ENCODE measurements at regions of chr7 and their contacts with region 1.

Region 1: DNA sequence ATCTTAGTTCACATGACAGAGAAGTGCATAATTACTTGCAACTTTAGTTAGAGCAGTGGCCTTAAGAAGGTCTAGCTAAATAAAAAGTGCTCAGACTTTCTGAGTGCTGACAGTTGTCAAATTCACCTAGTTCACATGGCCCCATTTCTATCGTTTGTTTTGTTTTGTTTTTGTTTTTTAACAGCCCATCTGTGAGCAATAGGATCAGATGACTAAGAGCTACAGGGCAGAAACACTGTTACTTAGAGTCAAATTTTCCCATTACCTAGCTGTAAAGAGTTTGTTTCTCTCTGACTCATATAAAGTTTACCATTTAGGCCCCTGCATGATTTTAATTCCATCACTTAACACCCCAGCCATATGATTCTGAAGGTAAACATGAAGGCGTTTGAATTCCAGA is 18.8 kb downstream of the CAV1 start:
- DNase-seq: no peak

Region 2: GRCh38 chr7:116515584-116515983 is 28.1 kb before region 1 on chr7:
- intact Hi-C with region 1: loop called in 1 of 2 experiments (anchors 1 kb)
- DNase-seq: no peak

Region 3: DNA sequence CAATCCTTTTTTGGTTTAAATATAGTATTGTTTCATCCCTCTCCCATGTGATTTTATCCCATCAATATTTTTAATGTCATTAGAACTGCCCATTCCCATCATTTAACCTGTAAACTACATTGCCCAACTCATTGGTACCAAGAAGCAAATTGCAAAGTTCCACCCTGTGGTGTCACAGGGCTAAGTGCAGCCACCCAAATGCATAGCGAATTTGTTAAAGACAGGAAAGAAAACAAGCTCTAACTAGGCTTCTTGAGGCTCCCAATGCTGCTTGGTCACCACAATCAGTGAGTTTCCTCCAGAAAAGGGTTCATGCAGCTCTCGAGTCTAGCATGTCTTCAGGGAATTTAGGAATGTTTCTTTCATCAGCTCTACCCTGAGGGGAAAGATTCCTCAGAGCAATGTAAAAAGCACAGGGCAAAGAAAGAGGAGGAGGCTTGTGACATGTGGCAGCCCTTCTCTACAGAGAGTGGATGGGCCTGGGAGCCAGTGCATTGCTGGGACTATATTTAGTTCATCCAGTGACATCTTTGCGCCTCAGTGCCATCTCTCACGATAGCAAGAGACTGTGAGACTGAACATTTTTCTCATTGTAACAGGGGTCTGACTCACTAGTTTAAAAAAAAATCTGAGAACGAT is 39.3 kb after region 1 on chr7:
- intact Hi-C with region 1: loop called in 1 of 2 experiments (anchors 5 kb)
- DNase-seq: peak; percentile 78